WTC11 (cell line): ENCODE measurements at regions of chr6 and their contacts with region 1.

Region 1: DNA sequence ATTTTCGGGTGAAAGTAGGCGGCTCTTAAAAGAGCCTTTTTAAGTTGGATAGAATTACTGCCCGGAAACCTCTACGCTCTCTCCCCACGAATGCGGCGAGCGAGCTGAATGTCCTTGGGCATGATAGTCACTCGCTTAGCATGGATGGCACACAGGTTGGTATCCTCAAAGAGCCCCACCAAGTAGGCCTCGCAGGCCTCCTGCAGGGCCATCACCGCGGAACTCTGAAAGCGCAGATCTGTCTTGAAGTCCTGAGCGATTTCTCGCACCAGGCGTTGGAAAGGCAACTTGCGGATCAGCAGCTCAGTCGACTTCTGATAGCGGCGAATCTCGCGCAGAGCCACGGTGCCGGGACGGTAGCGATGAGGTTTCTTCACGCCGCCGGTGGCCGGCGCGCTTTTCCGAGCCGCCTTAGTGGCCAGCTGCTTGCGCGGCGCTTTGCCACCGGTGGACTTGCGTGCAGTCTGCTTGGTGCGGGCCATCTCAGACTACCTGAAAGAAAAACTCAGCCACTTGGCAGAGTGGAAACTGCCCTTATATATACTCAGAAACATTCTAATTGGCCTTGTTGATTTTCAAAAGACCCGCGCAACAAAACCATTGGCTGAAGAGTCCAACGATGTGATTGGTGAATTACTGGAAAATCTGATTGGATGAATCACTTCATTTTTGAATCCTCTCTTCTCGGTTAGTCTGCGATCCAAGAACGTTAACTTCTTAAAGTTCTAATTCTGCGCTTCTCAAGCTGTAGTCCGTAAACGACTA is 93.9 kb upstream of the BTN3A2 start:
- DNase-seq: peak; percentile 65
- ATAC-seq: peak; percentile 28
- H3K4me3 Mint-ChIP-seq: no peak overlapping the region
- H3K27ac Mint-ChIP-seq: no peak overlapping the region
- H3K4me1 Mint-ChIP-seq: peaks cover 35% of the 10 kb centered on the region
- H3K27me3 Mint-ChIP-seq: no peaks in the 10 kb centered on the region
- CTCF ChIP-seq: no peak

Region 2: GRCh38 chr6:26031595-26032339 is 239.3 kb before region 1 on chr6:
- CTCF ChIA-PET with region 1: no interaction called
- POLR2A ChIA-PET with region 1: interaction called, 22 read pairs
- DNase-seq: peak; percentile 80
- ATAC-seq: peak; percentile 67
- H3K4me3 Mint-ChIP-seq: peak overlapping the region; percentile 91
- H3K27ac Mint-ChIP-seq: peak overlapping the region; percentile 100
- H3K4me1 Mint-ChIP-seq: peaks cover 59% of the 10 kb centered on the region
- H3K27me3 Mint-ChIP-seq: no peaks in the 10 kb centered on the region
- CTCF ChIP-seq: no peak

Region 3: DNA sequence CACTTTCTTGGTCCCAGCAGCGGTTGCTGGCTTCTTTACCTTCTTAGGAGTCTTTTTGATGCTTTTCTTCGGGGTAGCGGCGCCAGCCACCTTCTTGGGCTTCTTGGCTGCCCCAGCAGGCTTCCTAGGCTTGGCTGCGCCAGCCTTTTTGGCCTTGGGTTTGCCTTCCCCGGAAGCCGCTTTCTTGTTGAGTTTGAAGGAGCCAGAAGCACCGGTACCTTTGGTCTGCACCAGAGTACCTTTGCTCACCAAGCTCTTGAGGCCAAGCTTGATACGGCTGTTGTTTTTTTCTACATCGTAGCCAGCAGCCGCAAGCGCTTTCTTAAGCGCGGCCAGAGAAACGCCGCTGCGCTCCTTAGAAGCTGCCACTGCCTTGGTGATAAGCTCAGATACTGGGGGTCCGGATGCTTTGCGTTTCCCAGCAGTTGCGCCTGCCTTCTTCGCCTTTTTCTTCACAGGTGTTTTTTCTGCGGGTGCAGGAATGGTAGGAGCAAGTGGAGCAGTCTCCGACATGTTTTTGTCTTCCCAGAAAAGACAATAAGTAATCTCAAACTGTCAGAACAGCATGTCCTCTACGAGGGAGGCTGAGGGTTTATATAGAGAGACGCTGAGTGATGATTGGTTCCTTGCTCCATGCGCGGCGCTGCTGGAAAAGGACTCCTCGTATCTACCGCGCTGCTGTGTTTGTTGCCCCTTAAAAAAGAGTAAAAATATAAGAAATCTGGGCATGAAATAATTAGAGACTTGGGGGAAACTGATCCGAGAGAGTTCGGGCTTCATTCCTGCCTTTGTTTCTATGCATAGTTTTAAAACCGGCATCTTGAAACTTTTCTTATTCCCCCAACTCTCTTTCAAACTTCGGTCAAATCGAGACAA is 36.4 kb before region 1 on chr6:
- CTCF ChIA-PET with region 1: interaction called, 4 read pairs
- POLR2A ChIA-PET with region 1: interaction called, 146 read pairs
- DNase-seq: no peak
- ATAC-seq: peak; percentile 70
- H3K4me3 Mint-ChIP-seq: peak overlapping the region; percentile 94
- H3K27ac Mint-ChIP-seq: peak overlapping the region; percentile 99
- H3K4me1 Mint-ChIP-seq: peaks cover 33% of the 10 kb centered on the region
- H3K27me3 Mint-ChIP-seq: no peaks in the 10 kb centered on the region
- CTCF ChIP-seq: no peak

Region 4: DNA sequence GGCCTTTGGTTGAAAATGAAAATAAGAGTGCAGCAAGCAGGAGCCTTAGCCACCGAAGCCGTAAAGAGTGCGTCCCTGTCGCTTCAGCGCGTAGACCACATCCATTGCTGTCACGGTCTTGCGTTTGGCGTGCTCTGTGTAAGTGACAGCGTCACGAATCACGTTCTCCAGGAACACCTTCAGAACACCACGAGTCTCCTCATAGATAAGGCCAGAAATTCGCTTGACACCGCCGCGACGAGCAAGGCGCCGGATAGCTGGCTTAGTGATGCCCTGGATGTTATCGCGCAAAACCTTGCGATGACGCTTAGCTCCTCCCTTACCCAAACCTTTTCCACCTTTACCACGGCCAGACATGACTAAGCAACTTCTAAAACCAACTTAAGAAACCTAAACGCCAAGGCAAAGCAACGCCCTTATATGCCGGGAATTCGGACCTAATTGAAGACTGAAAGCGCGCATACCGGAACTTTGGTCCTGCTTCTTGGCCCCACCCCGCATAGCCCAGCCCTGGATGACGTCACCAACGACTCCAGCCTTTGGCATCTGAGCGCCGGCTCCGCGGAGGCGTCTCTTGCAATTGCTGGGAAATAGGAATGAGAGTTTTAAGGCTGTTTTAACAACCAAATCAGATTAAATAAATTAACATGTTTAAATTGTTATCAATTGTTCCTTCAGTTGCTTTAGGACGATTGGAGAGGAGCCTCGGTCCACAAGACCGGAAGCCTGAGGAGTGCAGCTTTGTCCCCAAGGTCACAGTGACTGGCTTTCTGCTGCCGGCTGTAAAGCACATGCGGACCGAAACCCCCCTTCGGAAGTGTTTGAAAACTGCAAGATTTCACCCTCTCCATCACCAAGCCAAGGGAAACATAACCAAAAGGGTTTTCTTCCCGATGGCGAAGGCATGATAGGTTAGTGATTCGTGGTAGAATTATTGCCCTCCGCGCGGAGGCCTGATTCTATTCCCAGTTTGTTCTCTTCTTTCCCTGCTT is 14.4 kb after region 1 on chr6:
- CTCF ChIA-PET with region 1: interaction called, 3 read pairs
- POLR2A ChIA-PET with region 1: interaction called, 153 read pairs
- DNase-seq: peak; percentile 96
- ATAC-seq: peak; percentile 73
- H3K4me3 Mint-ChIP-seq: peak overlapping the region; percentile 97
- H3K27ac Mint-ChIP-seq: peak overlapping the region; percentile 100
- H3K4me1 Mint-ChIP-seq: peaks cover 16% of the 10 kb centered on the region
- H3K27me3 Mint-ChIP-seq: peaks cover 4% of the 10 kb centered on the region
- CTCF ChIP-seq: no peak

Region 5: DNA sequence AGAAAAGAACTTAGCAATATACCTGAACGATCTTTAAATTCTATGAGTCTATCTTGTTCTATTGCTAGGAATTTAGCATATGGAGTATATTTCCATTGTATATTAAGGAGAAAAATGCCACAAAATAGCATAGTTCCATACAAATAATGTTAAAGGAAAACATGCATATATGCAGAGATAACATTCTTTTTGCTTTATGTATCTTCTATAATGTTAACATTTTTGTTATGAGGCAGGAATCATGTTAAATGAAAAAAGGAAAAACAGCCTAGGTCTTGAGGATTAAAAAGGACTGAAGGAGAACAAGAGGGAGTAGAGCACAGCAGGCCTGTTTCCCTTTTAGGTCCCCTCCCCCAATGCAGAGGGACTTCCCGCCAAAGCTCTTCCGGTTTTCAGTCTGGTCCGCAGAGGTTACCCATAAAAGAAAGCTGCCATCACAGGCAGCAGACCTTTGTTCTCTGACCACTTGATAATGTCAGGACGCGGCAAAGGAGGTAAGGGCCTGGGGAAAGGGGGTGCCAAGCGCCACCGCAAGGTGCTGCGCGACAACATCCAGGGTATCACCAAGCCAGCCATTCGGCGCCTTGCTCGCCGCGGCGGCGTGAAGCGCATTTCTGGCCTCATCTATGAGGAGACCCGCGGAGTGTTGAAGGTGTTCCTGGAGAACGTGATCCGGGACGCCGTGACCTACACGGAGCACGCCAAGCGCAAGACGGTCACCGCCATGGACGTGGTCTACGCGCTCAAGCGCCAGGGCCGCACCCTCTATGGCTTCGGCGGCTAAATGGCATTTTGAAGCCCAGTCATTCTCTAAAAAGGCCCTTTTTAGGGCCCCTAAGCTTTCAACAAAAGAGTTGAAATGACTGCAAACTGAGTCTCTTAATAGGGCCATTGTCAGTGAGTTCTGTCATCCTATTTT is 868.0 kb after region 1 on chr6:
- CTCF ChIA-PET with region 1: no interaction called
- POLR2A ChIA-PET with region 1: interaction called, 22 read pairs
- DNase-seq: peak; percentile 77
- ATAC-seq: peak; percentile 70
- H3K4me3 Mint-ChIP-seq: peak overlapping the region; percentile 97
- H3K27ac Mint-ChIP-seq: peak overlapping the region; percentile 99
- H3K4me1 Mint-ChIP-seq: peaks cover 59% of the 10 kb centered on the region
- H3K27me3 Mint-ChIP-seq: no peaks in the 10 kb centered on the region
- CTCF ChIP-seq: no peak

Region 6: GRCh38 chr6:27838058-27838944 is 1567.2 kb after region 1 on chr6:
- CTCF ChIA-PET with region 1: no interaction called
- POLR2A ChIA-PET with region 1: interaction called, 21 read pairs
- DNase-seq: peak; percentile 84
- ATAC-seq: peak; percentile 84
- H3K4me3 Mint-ChIP-seq: no peak overlapping the region
- H3K27ac Mint-ChIP-seq: no peak overlapping the region
- H3K4me1 Mint-ChIP-seq: peaks cover 28% of the 10 kb centered on the region
- H3K27me3 Mint-ChIP-seq: no peaks in the 10 kb centered on the region
- CTCF ChIP-seq: no peak